Naive thymus-derived CD4-positive, alpha-beta T cell (primary cell): ENCODE measurements at regions of chr12 and their contacts with region 1.

Region 1: DNA sequence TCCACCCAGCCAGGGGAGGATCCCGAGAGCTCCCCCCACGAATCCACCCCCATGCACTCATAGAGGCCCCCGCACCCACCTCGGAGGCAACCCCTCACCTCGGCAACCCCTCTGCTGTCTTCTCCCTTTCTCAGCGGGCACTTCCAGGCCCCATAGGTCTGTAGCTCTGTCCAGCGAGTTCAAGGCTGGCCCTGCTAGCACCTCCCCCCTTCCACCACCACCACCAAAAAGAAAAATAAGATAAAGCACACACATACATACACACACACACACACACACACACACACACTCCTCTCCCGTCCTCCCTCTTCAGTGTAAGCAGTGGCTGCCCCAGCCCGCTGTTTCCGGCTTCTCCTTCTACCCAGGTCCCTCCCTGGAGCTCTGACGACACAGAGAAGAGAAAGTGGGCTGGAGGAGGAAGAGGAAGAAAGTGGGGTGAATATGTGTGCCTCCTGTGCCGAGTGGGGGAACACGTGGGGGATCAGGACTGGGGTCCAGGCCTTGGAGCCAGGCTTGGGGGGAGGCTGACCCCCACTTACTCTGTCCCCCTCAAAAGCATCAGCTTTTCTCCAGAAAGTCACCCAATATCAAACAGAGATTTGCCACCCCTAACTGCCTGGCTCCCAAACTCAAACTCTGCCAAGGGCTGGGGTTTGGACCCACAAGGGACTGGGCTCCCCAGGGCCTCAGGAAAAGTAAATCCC is at the start of gene STAT6:
- DNase-seq: peak; percentile 53 to 94 (median 87)
- ATAC-seq: peak; percentile 77
- H3K4me3 ChIP-seq: peak within 1 kb of the TSS; percentile 75
- H3K4me3 Mint-ChIP-seq: peak within 1 kb of the TSS; percentile 89 to 100 (median 98)
- H3K27ac ChIP-seq: peak within 1 kb of the TSS; percentile 92
- H3K27ac Mint-ChIP-seq: peak within 1 kb of the TSS; percentile 93 to 100 (median 97)
- H3K4me1 ChIP-seq: peaks cover 12 to 26% of the 10 kb centered on the region in 2 donors
- H3K4me1 Mint-ChIP-seq: peaks cover 41 to 54% (median 46%) of the 10 kb centered on the region in 7 donors
- H3K27me3 ChIP-seq: no peaks in the 10 kb centered on the region
- H3K27me3 Mint-ChIP-seq: no peaks in the 10 kb centered on the region
- total RNA-seq, gene STAT6: 206 to 403 (median 294) TPM

Region 2: DNA sequence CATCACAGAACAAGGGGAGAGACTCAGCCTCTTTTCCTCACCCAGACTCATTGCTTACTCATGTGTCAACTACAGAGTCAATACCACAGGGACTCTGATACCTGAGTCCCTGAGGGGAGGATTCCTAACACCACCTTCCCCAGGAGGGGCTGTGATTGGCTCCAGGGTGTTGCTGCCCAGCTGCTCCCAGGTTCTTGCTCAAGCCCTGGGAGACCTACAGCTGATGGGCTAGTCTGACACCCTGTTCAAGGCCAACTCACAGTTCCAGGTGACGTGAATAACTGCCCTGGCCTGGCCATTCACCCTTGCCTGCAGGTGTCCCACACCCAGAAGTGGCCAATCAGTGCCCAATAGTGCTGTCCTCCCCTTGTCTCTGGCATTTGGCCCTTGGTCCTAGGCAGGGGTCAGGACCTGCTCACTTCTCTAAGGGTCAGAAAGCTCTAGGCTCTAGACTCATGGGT is 634.2 kb before region 1 on chr12:
- CTCF ChIA-PET with region 1: no interaction called
- POLR2A ChIA-PET with region 1: no interaction called
- intact Hi-C with region 1: no loop called
- DNase-seq: no peak
- ATAC-seq: no peak
- H3K4me3 ChIP-seq: no peak overlapping the region
- H3K4me3 Mint-ChIP-seq: no peak overlapping the region
- H3K27ac ChIP-seq: no peak overlapping the region
- H3K27ac Mint-ChIP-seq: peak overlapping the region in 2 of 9 donors; percentile 29 to 30
- H3K4me1 ChIP-seq: no peaks in the 10 kb centered on the region
- H3K4me1 Mint-ChIP-seq: peaks cover 0 to 8% (median 2%) of the 10 kb centered on the region in 7 donors
- H3K27me3 ChIP-seq: no peaks in the 10 kb centered on the region
- H3K27me3 Mint-ChIP-seq: no peaks in the 10 kb centered on the region

Region 3: DNA sequence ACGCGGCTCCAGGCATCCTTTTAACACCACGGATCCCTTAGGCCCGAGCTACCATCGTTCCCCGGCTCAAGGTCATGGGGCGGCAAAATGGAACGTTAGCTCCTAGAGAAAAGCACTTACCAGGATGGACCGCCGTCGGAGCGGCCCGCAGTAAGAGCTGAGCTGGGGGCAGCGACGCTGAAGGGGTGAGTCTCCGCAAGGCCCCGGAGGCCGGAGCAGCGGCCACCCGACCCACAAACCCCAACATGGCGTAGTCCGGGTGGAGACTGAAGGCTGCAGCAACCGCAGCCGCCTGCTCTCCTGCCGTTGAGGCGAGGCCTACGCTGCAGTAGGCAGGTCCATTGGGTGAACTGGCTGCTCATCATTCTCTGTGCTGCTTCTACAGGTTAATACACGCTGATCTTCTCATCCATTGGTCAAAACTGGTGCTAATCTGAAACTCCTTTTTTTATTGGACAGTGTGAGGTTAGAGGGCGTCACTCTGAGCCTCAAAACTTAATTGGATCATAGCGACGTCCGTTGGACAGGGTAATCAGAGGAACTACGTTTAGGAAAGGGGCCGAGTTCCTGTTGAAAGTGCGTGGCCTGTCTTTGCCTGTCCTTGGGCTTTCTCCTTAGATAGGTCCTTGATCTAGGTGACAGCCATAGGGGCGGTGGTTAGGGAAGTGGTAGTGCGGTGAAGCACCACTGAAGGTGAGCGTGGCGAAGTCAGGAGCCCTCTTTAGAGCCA is 465.3 kb before region 1 on chr12 and contains the start of gene ATP5F1B:
- CTCF ChIA-PET with region 1: interaction called, 3 read pairs
- POLR2A ChIA-PET with region 1: interaction called, 4 read pairs
- intact Hi-C with region 1: loop called in 1 of 2 experiments (anchors 5 kb)
- DNase-seq: peak; percentile 65 to 97 (median 93)
- ATAC-seq: peak; percentile 97
- H3K4me3 ChIP-seq: peak within 1 kb of the TSS; percentile 83
- H3K4me3 Mint-ChIP-seq: peak within 1 kb of the TSS; percentile 82 to 98 (median 94)
- H3K27ac ChIP-seq: peak within 1 kb of the TSS; percentile 93
- H3K27ac Mint-ChIP-seq: peak within 1 kb of the TSS; percentile 97 to 100 (median 99)
- H3K4me1 ChIP-seq: peaks cover 4 to 21% of the 10 kb centered on the region in 2 donors
- H3K4me1 Mint-ChIP-seq: peaks cover 17 to 39% (median 34%) of the 10 kb centered on the region in 7 donors
- H3K27me3 ChIP-seq: no peaks in the 10 kb centered on the region
- H3K27me3 Mint-ChIP-seq: no peaks in the 10 kb centered on the region
- total RNA-seq, gene ATP5F1B: 217 to 476 (median 267) TPM

Region 4: GRCh38 chr12:56839915-56840325 is 271.3 kb before region 1 on chr12:
- CTCF ChIA-PET with region 1: no interaction called
- POLR2A ChIA-PET with region 1: no interaction called
- intact Hi-C with region 1: loop called in 1 of 2 experiments (anchors 5 kb)
- DNase-seq: peak in 4 of 9 donors; percentile 12 to 35 (median 16)
- ATAC-seq: no peak
- H3K4me3 ChIP-seq: no peak overlapping the region
- H3K4me3 Mint-ChIP-seq: no peak overlapping the region
- H3K27ac ChIP-seq: no peak overlapping the region
- H3K27ac Mint-ChIP-seq: no peak overlapping the region
- H3K4me1 ChIP-seq: peaks cover 6 to 10% of the 10 kb centered on the region in 2 donors
- H3K4me1 Mint-ChIP-seq: peaks cover 10 to 21% (median 17%) of the 10 kb centered on the region in 7 donors
- H3K27me3 ChIP-seq: no peaks in the 10 kb centered on the region
- H3K27me3 Mint-ChIP-seq: peaks cover 0 to 13% (median 0%) of the 10 kb centered on the region in 5 donors

Region 5: GRCh38 chr12:57069523-57069922 is 41.7 kb before region 1 on chr12:
- CTCF ChIA-PET with region 1: interaction called, 212 read pairs
- POLR2A ChIA-PET with region 1: interaction called, 294 read pairs
- intact Hi-C with region 1: loop called (anchors 1 kb)
- DNase-seq: peak in 8 of 9 donors; percentile 42 to 79 (median 72)
- ATAC-seq: peak; percentile 100
- H3K4me3 ChIP-seq: no peak overlapping the region
- H3K4me3 Mint-ChIP-seq: peak overlapping the region in 8 of 10 donors; percentile 4 to 33 (median 20)
- H3K27ac ChIP-seq: peak overlapping the region; percentile 60
- H3K27ac Mint-ChIP-seq: peak overlapping the region; percentile 70 to 89 (median 83)
- H3K4me1 ChIP-seq: peaks cover 4 to 15% of the 10 kb centered on the region in 2 donors
- H3K4me1 Mint-ChIP-seq: peaks cover 13 to 50% (median 30%) of the 10 kb centered on the region in 7 donors
- H3K27me3 ChIP-seq: no peaks in the 10 kb centered on the region
- H3K27me3 Mint-ChIP-seq: no peaks in the 10 kb centered on the region

Region 6: GRCh38 chr12:57124259-57124877 is 13.2 kb after region 1 on chr12:
- CTCF ChIA-PET with region 1: interaction called, 38 read pairs
- POLR2A ChIA-PET with region 1: interaction called, 17 read pairs
- intact Hi-C with region 1: loop called in 1 of 2 experiments (anchors 1 kb)
- DNase-seq: peak; percentile 50 to 82 (median 72)
- ATAC-seq: peak; percentile 87
- H3K4me3 ChIP-seq: no peak overlapping the region
- H3K4me3 Mint-ChIP-seq: peak overlapping the region in 2 of 10 donors; percentile 20 to 24
- H3K27ac ChIP-seq: no peak overlapping the region
- H3K27ac Mint-ChIP-seq: peak overlapping the region in 2 of 9 donors; percentile 15 to 37
- H3K4me1 ChIP-seq: peaks cover 0 to 6% of the 10 kb centered on the region in 2 donors
- H3K4me1 Mint-ChIP-seq: peaks cover 2 to 16% (median 6%) of the 10 kb centered on the region in 7 donors
- H3K27me3 ChIP-seq: no peaks in the 10 kb centered on the region
- H3K27me3 Mint-ChIP-seq: peaks cover 0 to 34% (median 0%) of the 10 kb centered on the region in 5 donors

Region 7: DNA sequence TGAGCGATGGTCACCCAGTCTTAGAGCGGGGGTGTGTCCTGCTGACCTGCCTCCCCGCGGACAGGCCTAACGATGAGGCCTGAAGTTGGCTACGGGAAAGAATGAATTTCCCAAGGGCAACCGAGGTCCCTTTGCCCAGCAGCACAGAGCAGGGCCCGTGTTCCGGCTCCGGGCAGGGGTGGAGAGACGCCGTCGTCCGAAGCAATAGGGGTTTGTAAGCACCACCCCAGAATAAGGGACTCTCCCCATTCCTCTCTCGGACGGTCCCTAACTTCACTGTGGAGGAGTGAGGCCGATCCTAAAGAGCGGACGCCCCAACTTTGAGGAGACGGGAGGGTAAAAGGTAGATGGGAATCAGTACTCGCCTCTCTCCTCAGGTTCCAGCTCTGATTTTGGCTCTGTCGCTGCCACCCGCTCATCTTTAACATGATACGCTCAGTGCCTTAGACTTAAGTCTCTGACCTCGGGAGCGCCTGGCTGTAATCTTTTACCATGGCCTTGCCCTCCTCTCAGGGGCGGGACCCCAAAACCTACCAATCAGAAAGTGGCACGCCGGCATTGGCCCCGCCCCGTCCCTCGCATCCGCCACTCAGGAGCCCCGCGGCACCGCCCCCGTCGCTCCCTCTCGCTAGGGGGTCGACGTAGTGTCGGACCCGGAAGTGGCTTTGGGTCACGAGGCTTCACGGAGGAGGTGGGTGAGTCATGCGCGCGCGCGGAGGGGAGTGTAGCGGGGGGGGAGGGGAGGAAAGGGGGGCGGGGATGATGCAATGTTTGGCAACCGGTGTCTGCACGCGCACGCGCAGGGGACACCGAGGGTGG is 409.1 kb after region 1 on chr12 and contains the start of gene DDIT3:
- CTCF ChIA-PET with region 1: no interaction called
- POLR2A ChIA-PET with region 1: no interaction called
- intact Hi-C with region 1: loop called in 1 of 2 experiments (anchors 5 kb)
- DNase-seq: peak; percentile 98 to 99 (median 99)
- ATAC-seq: peak; percentile 89
- H3K4me3 ChIP-seq: peak within 1 kb of the TSS; percentile 100
- H3K4me3 Mint-ChIP-seq: peak within 1 kb of the TSS; percentile 89 to 99 (median 98)
- H3K27ac ChIP-seq: peak within 1 kb of the TSS; percentile 95
- H3K27ac Mint-ChIP-seq: peak within 1 kb of the TSS; percentile 97 to 100 (median 99)
- H3K4me1 ChIP-seq: peaks cover 32 to 41% of the 10 kb centered on the region in 2 donors
- H3K4me1 Mint-ChIP-seq: peaks cover 47 to 80% (median 56%) of the 10 kb centered on the region in 7 donors
- H3K27me3 ChIP-seq: no peaks in the 10 kb centered on the region
- H3K27me3 Mint-ChIP-seq: peaks cover 0 to 7% (median 0%) of the 10 kb centered on the region in 5 donors
- total RNA-seq, gene DDIT3: 19.6 to 124 (median 51.6) TPM